T-cell (primary cell): ENCODE measurements at regions of chr5 and their contacts with region 1.

Region 1: GRCh38 chr5:76855961-76856360 is 6.1 kb downstream of the S100Z start:
- DNase-seq: peak in 27 of 35 experiments; percentile 1 to 48 (median 18)
- ATAC-seq: peak; percentile 89 to 97 (median 92)
- H3K4me3 ChIP-seq: no peak overlapping the region
- H3K4me3 Mint-ChIP-seq: peak overlapping the region in 1 of 3 donors; percentile 75
- H3K27ac ChIP-seq: peak overlapping the region; percentile 61
- H3K27ac Mint-ChIP-seq: peak overlapping the region; percentile 87 to 97
- H3K4me1 ChIP-seq: peaks cover 36% of the 10 kb centered on the region in 2 experiments
- H3K4me1 Mint-ChIP-seq: peaks cover 36 to 55% (median 42%) of the 10 kb centered on the region in 3 donors
- H3K27me3 ChIP-seq: no peaks in the 10 kb centered on the region
- H3K27me3 Mint-ChIP-seq: no peaks in the 10 kb centered on the region

Region 2: DNA sequence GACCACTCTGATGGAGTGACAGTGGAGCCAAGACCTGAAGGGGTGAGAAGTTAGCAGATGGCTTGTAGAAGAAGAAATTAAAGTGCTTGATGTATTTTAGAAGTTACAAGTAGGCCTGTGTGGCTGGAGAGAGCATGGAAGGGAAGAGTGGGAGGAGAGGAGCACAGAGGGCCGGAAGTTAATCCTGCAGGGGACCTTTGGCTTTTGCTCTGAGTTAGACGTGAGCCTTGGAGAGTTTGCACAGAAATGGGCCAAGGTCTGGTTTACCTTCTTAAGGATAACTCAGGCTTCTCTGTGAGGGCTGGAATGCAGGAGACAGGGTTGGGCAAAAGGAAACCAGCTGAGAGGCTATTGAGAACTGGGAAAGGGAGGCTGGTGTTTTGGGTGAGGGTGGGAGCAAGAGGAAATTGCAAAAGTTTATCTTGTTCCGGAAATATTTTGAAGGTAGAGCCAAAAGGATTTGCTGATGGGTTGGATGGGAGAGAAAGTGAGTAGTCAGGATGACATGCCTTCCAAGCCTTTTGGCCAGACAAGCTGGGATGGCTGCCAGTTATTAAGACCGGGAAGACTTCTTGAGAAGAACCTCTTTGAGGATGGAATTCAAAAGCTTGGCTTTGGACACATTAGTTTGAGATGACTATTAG is 54.7 kb before region 1 on chr5:
- CTCF ChIA-PET with region 1: interaction called in 1 of 2 experiments, 11 read pairs
- POLR2A ChIA-PET with region 1: no interaction called
- DNase-seq: no peak
- ATAC-seq: no peak
- H3K4me3 ChIP-seq: no peak overlapping the region
- H3K4me3 Mint-ChIP-seq: no peak overlapping the region
- H3K27ac ChIP-seq: no peak overlapping the region
- H3K27ac Mint-ChIP-seq: no peak overlapping the region
- H3K4me1 ChIP-seq: no peaks in the 10 kb centered on the region
- H3K4me1 Mint-ChIP-seq: no peaks in the 10 kb centered on the region
- H3K27me3 ChIP-seq: peaks cover 0 to 5% of the 10 kb centered on the region in 2 experiments
- H3K27me3 Mint-ChIP-seq: peaks cover 0 to 17% of the 10 kb centered on the region in 2 donors

Region 3: GRCh38 chr5:76841361-76841760 is 14.6 kb before region 1 on chr5:
- CTCF ChIA-PET with region 1: no interaction called
- POLR2A ChIA-PET with region 1: no interaction called
- DNase-seq: no peak
- ATAC-seq: no peak
- H3K4me3 ChIP-seq: no peak overlapping the region
- H3K4me3 Mint-ChIP-seq: no peak overlapping the region
- H3K27ac ChIP-seq: no peak overlapping the region
- H3K27ac Mint-ChIP-seq: no peak overlapping the region
- H3K4me1 ChIP-seq: no peaks in the 10 kb centered on the region
- H3K4me1 Mint-ChIP-seq: no peaks in the 10 kb centered on the region
- H3K27me3 ChIP-seq: peaks cover 0 to 6% of the 10 kb centered on the region in 2 experiments
- H3K27me3 Mint-ChIP-seq: peaks cover 2 to 3% of the 10 kb centered on the region in 2 donors

Region 4: GRCh38 chr5:77305956-77306355 is 450.0 kb after region 1 on chr5:
- CTCF ChIA-PET with region 1: no interaction called
- POLR2A ChIA-PET with region 1: no interaction called
- DNase-seq: no peak
- ATAC-seq: no peak
- H3K4me3 ChIP-seq: no peak overlapping the region
- H3K4me3 Mint-ChIP-seq: no peak overlapping the region
- H3K27ac ChIP-seq: no peak overlapping the region
- H3K27ac Mint-ChIP-seq: no peak overlapping the region
- H3K4me1 ChIP-seq: no peaks in the 10 kb centered on the region
- H3K4me1 Mint-ChIP-seq: no peaks in the 10 kb centered on the region
- H3K27me3 ChIP-seq: peaks cover 0 to 4% of the 10 kb centered on the region in 2 experiments
- H3K27me3 Mint-ChIP-seq: peaks cover 0 to 2% of the 10 kb centered on the region in 2 donors

Region 5: GRCh38 chr5:77560677-77561263 is 704.8 kb after region 1 on chr5:
- CTCF ChIA-PET with region 1: no interaction called
- POLR2A ChIA-PET with region 1: interaction called in 1 of 2 experiments, 16 read pairs
- DNase-seq: peak in 1 of 35 experiments; percentile 37
- ATAC-seq: no peak
- H3K4me3 ChIP-seq: no peak overlapping the region
- H3K4me3 Mint-ChIP-seq: no peak overlapping the region
- H3K27ac ChIP-seq: no peak overlapping the region
- H3K27ac Mint-ChIP-seq: no peak overlapping the region
- H3K4me1 ChIP-seq: no peaks in the 10 kb centered on the region
- H3K4me1 Mint-ChIP-seq: no peaks in the 10 kb centered on the region
- H3K27me3 ChIP-seq: no peaks in the 10 kb centered on the region
- H3K27me3 Mint-ChIP-seq: peaks cover 5 to 7% of the 10 kb centered on the region in 2 donors